K562 (cell line): ENCODE measurements at regions of chr10 and their contacts with region 1.

Region 1: GRCh38 chr10:67779465-67780203 is 58.4 kb downstream of the DNAJC12 start:
- DNase-seq: peak; percentile 72 to 89 (median 75)
- ATAC-seq: peak; percentile 87
- H3K4me3 ChIP-seq: no peak overlapping the region
- H3K27ac ChIP-seq: no peak overlapping the region
- H3K4me1 ChIP-seq: no peaks in the 10 kb centered on the region
- H3K27me3 ChIP-seq: no peaks in the 10 kb centered on the region; a peak in 1 of 5 replicates
- CTCF ChIP-seq: peak; percentile 78 to 96 (median 87)
- EP300 ChIP-seq: no peak
- POLR2A ChIP-seq: no peak
- RAD21 ChIP-seq: peak; percentile 96

Region 2: GRCh38 chr10:66180581-66181318 is 1598.9 kb before region 1 on chr10:
- CTCF ChIA-PET with region 1: no interaction called
- POLR2A ChIA-PET with region 1: no interaction called
- in situ Hi-C with region 1: no loop called
- intact Hi-C with region 1: loop called (anchors 5 kb)
- DNase-seq: peak; percentile 30 to 62 (median 46)
- ATAC-seq: peak; percentile 69; the same call in 2 of the 3 replicates
- H3K4me3 ChIP-seq: no peak overlapping the region
- H3K27ac ChIP-seq: no peak overlapping the region
- H3K4me1 ChIP-seq: no peaks in the 10 kb centered on the region
- H3K27me3 ChIP-seq: no peaks in the 10 kb centered on the region; a peak in 1 of 5 replicates
- CTCF ChIP-seq: peak; percentile 26 to 69 (median 51); a peak in 5 of 6 replicates
- EP300 ChIP-seq: no peak
- POLR2A ChIP-seq: no peak
- RAD21 ChIP-seq: peak; percentile 59 to 72

Region 3: DNA sequence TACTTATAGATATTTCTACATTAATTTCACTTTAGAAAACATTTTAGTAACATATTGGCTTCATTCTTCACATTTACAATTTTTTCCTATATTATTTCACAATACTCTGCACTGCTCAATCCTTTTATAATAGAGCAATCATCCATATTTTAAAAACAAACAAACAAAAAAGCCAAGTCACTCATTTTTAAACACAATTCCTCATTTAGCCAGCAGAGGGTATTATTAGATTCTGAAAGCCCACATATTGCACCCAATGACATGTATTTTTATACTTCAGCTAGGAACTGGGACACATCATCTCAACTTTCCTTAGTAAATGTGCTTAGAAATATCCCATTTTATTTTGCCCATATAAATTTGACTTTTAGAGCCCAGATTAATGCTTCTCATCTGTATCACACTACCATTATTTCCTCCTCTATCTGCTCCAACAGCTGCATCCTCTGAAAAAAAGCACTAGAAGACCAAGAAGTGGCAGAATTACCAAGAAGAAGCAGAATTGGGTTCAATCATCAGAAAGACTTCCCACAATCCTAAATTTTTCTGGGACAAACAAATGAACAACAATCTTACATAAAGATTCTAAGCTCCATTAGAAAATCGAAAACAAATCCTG is 113.1 kb before region 1 on chr10:
- CTCF ChIA-PET with region 1: interaction called, 49 read pairs
- POLR2A ChIA-PET with region 1: interaction called, 3 read pairs
- in situ Hi-C with region 1: loop called (anchors 10 kb)
- intact Hi-C with region 1: loop called (anchors 1 kb)
- DNase-seq: peak; percentile 16 to 38 (median 29)
- ATAC-seq: peak; percentile 75
- H3K4me3 ChIP-seq: no peak overlapping the region
- H3K27ac ChIP-seq: no peak overlapping the region
- H3K4me1 ChIP-seq: no peaks in the 10 kb centered on the region
- H3K27me3 ChIP-seq: no peaks in the 10 kb centered on the region
- CTCF ChIP-seq: peak; percentile 39 to 76 (median 46); a peak in 4 of 6 replicates
- EP300 ChIP-seq: no peak
- POLR2A ChIP-seq: no peak
- RAD21 ChIP-seq: peak; percentile 75 to 82

Region 4: GRCh38 chr10:67697724-67698131 is 81.9 kb before region 1 on chr10:
- CTCF ChIA-PET with region 1: interaction called, 16 read pairs
- POLR2A ChIA-PET with region 1: interaction called, 3 read pairs
- in situ Hi-C with region 1: loop called (anchors 5 kb)
- intact Hi-C with region 1: loop called (anchors 1 kb)
- DNase-seq: peak; percentile 15 to 42 (median 32)
- ATAC-seq: peak; percentile 89
- H3K4me3 ChIP-seq: no peak overlapping the region
- H3K27ac ChIP-seq: no peak overlapping the region
- H3K4me1 ChIP-seq: no peaks in the 10 kb centered on the region
- H3K27me3 ChIP-seq: 0 out of 5 replicates have a peak, but pooled peaks cover 0 to 2% of the 10 kb centered on the region in 2 experiments
- CTCF ChIP-seq: peak; percentile 47 to 67 (median 50); a peak in 4 of 6 replicates
- EP300 ChIP-seq: no peak
- POLR2A ChIP-seq: no peak
- RAD21 ChIP-seq: peak; percentile 68 to 69

Region 5: DNA sequence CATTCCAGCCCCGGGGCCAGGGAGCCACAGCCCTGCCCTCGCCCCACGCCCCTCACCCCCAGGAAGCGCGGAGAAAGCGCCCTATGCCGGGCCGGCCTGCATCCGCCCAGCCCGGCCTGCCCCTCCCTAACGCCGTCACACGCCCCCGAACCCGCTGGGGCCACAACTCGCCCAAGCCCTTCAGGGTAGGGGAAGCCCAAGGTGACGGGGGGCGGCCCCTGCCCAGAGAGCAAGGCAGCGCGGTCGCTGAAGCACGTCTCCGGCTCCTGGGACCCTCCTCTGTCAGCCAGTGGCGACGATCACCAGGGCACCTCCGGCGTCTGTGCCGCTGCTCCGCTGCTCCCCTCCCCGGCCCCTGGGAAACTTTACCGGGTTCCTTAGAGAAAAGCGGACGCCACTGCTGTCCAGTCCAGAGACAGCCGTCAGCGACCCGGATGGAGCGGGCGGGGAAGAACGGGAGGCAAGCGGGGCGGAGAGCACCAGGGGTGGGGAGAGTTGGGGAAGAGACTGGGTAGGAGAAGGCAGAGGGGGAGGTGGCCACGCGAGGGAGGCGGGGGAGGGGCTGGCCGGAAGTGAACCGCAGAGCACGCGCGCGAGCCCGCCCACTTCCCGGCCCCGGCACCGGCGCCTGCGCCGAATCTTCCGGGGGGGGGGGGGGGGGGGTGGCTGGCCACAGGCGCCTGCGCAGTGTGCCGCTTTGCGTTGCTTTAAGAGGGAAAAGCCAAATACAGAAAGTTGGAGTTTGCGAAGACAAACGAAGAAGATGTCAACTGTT is 295.3 kb after region 1 on chr10 and contains the start of gene HERC4:
- CTCF ChIA-PET with region 1: no interaction called
- POLR2A ChIA-PET with region 1: no interaction called
- in situ Hi-C with region 1: no loop called
- intact Hi-C with region 1: loop called (anchors 10 kb)
- DNase-seq: peak; percentile 97 to 99 (median 98)
- ATAC-seq: peak; percentile 96
- H3K4me3 ChIP-seq: peak within 1 kb of the TSS; percentile 99
- H3K27ac ChIP-seq: peak within 1 kb of the TSS; percentile 95
- H3K4me1 ChIP-seq: peaks cover 7 to 9% of the 10 kb centered on the region in 2 experiments; a peak in 4 of 5 replicates
- H3K27me3 ChIP-seq: no peaks in the 10 kb centered on the region
- CTCF ChIP-seq: no peak
- EP300 ChIP-seq: peak; percentile 25; the same call in 1 of the 2 replicates
- POLR2A ChIP-seq: peak; percentile 91
- RAD21 ChIP-seq: no peak; a peak in 1 of 4 replicates
- polyA plus RNA-seq, gene HERC4: 12.5 to 17.4 TPM